ENCODE measurements at regions of chr15 and their contacts with region 1.

Region 1: GRCh38 chr15:93428135-93428534 is 339.1 kb upstream of the RGMA start:
- DNase-seq: no peak
- ATAC-seq: peak in 2 of 4 donors; percentile 88 to 91
- H3K4me3 ChIP-seq: no peak overlapping the region
- H3K27ac ChIP-seq: no peak overlapping the region
- H3K4me1 ChIP-seq: peaks cover 5% of the 10 kb centered on the region
- H3K27me3 ChIP-seq: no peaks in the 10 kb centered on the region
- CTCF ChIP-seq: no peak

Region 2: GRCh38 chr15:93164409-93164808 is 263.7 kb before region 1 on chr15:
- intact Hi-C with region 1: no loop called
- DNase-seq: no peak
- ATAC-seq: no peak
- H3K4me3 ChIP-seq: no peak overlapping the region
- H3K27ac ChIP-seq: no peak overlapping the region
- H3K4me1 ChIP-seq: no peaks in the 10 kb centered on the region
- H3K27me3 ChIP-seq: no peaks in the 10 kb centered on the region
- CTCF ChIP-seq: no peak

Region 3: GRCh38 chr15:93265111-93265556 is 163.0 kb before region 1 on chr15:
- intact Hi-C with region 1: loop called in 1 of 2 experiments (anchors 10 kb)
- DNase-seq: no peak
- ATAC-seq: peak; percentile 32 to 79 (median 61)
- H3K4me3 ChIP-seq: no peak overlapping the region
- H3K27ac ChIP-seq: no peak overlapping the region
- H3K4me1 ChIP-seq: no peaks in the 10 kb centered on the region
- H3K27me3 ChIP-seq: no peaks in the 10 kb centered on the region
- CTCF ChIP-seq: no peak

Measured in psoas muscle (tissue), 8 donors.